ENCODE measurements at regions of chr3 and their contacts with region 1.

Region 1: GRCh38 chr3:16048435-16049318 is 125.8 kb upstream of the GALNT15 start:
- DNase-seq: peak; percentile 53 to 61
- ATAC-seq: peak; percentile 80 to 89
- H3K4me3 ChIP-seq: peak overlapping the region in 2 of 4 donors; percentile 29 to 47
- H3K27ac ChIP-seq: peak overlapping the region in 3 of 4 donors; percentile 1 to 87 (median 36)
- H3K4me1 ChIP-seq: peaks cover 4 to 20% of the 10 kb centered on the region in 2 donors
- H3K27me3 ChIP-seq: no peaks in the 10 kb centered on the region
- CTCF ChIP-seq: peak; percentile 77 to 88 (median 87)
- POLR2A ChIP-seq: no peak

Region 2: DNA sequence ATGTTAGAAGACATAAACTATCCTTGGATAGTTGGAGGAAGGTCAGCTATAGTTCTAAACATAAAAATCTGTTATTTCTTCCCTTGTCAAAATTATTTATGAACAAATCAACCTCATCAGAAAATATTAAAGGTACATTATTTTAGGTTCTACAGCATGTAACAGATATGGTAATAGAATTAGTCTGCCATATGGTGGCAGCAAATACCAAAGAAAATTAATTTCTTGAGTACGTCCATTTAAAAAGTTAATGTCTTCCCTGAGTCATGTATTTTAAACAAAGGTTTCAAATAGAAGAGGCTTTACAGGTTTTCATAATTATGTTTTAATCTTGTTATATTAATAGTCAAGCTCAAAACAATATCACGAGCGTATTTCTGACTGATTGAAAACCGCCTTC is 233.0 kb before region 1 on chr3:
- in situ Hi-C with region 1: no loop called
- intact Hi-C with region 1: loop called (anchors 5 kb)
- DNase-seq: no peak
- ATAC-seq: peak; percentile 74 to 85
- H3K4me3 ChIP-seq: no peak overlapping the region
- H3K27ac ChIP-seq: peak overlapping the region in 2 of 4 donors; percentile 37 to 42
- H3K4me1 ChIP-seq: peaks cover 8 to 18% of the 10 kb centered on the region in 2 donors
- H3K27me3 ChIP-seq: no peaks in the 10 kb centered on the region
- CTCF ChIP-seq: peak in 3 of 5 experiments; percentile 43 to 78 (median 55)
- POLR2A ChIP-seq: no peak

Region 3: GRCh38 chr3:16033889-16034687 is 14.6 kb before region 1 on chr3:
- in situ Hi-C with region 1: no loop called
- intact Hi-C with region 1: no loop called
- DNase-seq: no peak
- ATAC-seq: no peak
- H3K4me3 ChIP-seq: no peak overlapping the region
- H3K27ac ChIP-seq: peak overlapping the region in 1 of 4 donors; percentile 12
- H3K4me1 ChIP-seq: no peaks in the 10 kb centered on the region
- H3K27me3 ChIP-seq: no peaks in the 10 kb centered on the region
- CTCF ChIP-seq: no peak
- POLR2A ChIP-seq: no peak

Region 4: DNA sequence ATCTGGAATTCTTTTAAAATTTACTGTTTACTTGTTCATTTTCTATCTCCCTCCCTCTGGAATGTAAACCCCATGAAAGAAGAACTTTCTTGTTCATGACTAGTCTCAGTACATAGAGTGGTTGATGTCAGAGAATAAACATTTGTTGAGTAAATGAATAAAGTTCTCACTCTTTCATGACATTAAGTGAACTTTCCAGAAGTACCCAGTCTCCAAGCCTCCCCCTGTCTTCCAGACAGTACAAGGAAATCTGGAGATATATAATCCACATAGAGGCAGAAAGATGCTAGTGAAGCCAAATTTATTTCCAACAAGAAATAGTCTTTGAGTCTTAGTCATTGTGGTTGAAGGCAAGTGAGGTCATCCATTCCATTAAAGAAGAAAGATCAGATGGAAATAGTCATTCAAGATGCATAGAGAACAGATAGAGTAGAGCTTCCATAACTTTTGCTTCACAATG is 54.3 kb after region 1 on chr3:
- in situ Hi-C with region 1: no loop called
- intact Hi-C with region 1: no loop called
- DNase-seq: no peak
- ATAC-seq: no peak
- H3K4me3 ChIP-seq: no peak overlapping the region
- H3K27ac ChIP-seq: peak overlapping the region; percentile 23 to 50 (median 38)
- H3K4me1 ChIP-seq: peaks cover 0 to 9% of the 10 kb centered on the region in 2 donors
- H3K27me3 ChIP-seq: no peaks in the 10 kb centered on the region
- CTCF ChIP-seq: no peak
- POLR2A ChIP-seq: no peak

Region 5: GRCh38 chr3:16177962-16178627 is 129.4 kb after region 1 on chr3:
- in situ Hi-C with region 1: loop called in 2 of 4 experiments (anchors 5 kb)
- intact Hi-C with region 1: loop called (anchors 1 kb)
- DNase-seq: peak; percentile 56 to 77
- ATAC-seq: peak; percentile 12 to 47
- H3K4me3 ChIP-seq: peak overlapping the region; percentile 51 to 66 (median 64)
- H3K27ac ChIP-seq: peak overlapping the region in 3 of 4 donors; percentile 77 to 84 (median 82)
- H3K4me1 ChIP-seq: peaks cover 10 to 33% of the 10 kb centered on the region in 2 donors
- H3K27me3 ChIP-seq: no peaks in the 10 kb centered on the region
- CTCF ChIP-seq: peak; percentile 94 to 99 (median 97)
- POLR2A ChIP-seq: no peak

Region 6: GRCh38 chr3:16247276-16248061 is 198.8 kb after region 1 on chr3:
- in situ Hi-C with region 1: loop called (anchors 5 to 10 kb)
- intact Hi-C with region 1: loop called (anchors 1 kb)
- DNase-seq: peak; percentile 61 to 78
- ATAC-seq: peak; percentile 39 to 60
- H3K4me3 ChIP-seq: no peak overlapping the region
- H3K27ac ChIP-seq: no peak overlapping the region
- H3K4me1 ChIP-seq: peaks cover 26 to 27% of the 10 kb centered on the region in 2 donors
- H3K27me3 ChIP-seq: no peaks in the 10 kb centered on the region
- CTCF ChIP-seq: peak; percentile 79 to 98 (median 95)
- POLR2A ChIP-seq: no peak

Measured in gastrocnemius medialis (tissue), 4 donors.